OCI-LY7 (cell line): ENCODE measurements at regions of chr11 and their contacts with region 1.

Region 1: GRCh38 chr11:6315811-6316425 is 4.4 kb downstream of the CAVIN3 start:
- DNase-seq: peak; percentile 62
- H3K4me3 ChIP-seq: no peak overlapping the region
- H3K27ac ChIP-seq: no peak overlapping the region
- H3K4me1 ChIP-seq: no peaks in the 10 kb centered on the region
- CTCF ChIP-seq: peak; percentile 87

Region 2: DNA sequence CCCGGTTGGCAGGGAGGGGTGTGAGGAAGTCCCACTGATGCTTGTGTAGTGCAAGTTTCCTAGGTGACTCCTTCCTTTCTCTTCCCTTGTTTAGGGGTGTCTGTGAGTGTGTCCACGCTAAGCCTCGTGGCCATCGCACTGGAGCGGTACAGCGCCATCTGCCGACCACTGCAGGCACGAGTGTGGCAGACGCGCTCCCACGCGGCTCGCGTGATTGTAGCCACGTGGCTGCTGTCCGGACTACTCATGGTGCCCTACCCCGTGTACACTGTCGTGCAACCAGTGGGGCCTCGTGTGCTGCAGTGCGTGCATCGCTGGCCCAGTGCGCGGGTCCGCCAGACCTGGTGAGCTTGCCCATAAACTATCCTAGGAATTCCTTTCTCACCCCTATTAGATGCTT is 45.9 kb before region 1 on chr11:
- CTCF ChIA-PET with region 1: no interaction called
- POLR2A ChIA-PET with region 1: no interaction called
- intact Hi-C with region 1: loop called (anchors 5 kb)
- DNase-seq: no peak
- H3K4me3 ChIP-seq: no peak overlapping the region
- H3K27ac ChIP-seq: no peak overlapping the region
- H3K4me1 ChIP-seq: no peaks in the 10 kb centered on the region
- CTCF ChIP-seq: 0 out of 2 replicates have a peak, but pooled peaks have one; percentile 11

Region 3: DNA sequence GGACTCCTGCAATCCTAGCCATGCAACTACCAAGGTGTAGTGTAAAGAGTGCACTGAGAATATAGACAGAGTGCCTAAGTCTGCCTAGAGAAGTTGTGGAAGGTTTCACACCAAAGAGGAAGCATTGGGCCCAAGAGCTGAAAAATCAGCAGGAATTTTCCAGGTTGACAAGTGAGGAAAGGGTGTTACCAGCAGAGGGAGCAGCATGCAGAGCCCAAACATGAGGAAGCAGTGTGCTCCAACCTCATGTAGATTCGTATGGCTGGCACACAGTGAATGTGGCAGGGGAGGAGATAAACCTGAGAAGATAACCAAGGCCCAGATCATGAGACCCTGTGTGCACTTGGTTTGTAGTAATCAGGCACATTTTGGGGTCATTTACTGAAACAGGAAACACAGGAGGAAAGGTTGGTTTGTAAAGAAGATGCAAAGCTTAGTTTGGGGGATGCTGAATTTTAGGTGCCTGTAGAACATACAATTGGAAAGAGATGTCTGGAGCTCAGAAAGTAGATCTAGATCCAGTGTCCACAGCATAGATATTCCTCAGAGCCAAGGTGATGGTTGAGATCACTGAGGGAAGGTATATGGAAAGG is 123.2 kb after region 1 on chr11:
- CTCF ChIA-PET with region 1: no interaction called
- POLR2A ChIA-PET with region 1: no interaction called
- intact Hi-C with region 1: no loop called
- DNase-seq: peak; percentile 72
- H3K4me3 ChIP-seq: no peak overlapping the region
- H3K27ac ChIP-seq: no peak overlapping the region
- H3K4me1 ChIP-seq: peaks cover 80% of the 10 kb centered on the region
- CTCF ChIP-seq: peak; percentile 83